SK-N-SH (cell line): ENCODE measurements at regions of chr1 and their contacts with region 1.

Region 1: GRCh38 chr1:119275145-119276134 is 93.1 kb upstream of the HAO2 start:
- DNase-seq: peak; percentile 30
- H3K4me3 ChIP-seq: no peak overlapping the region; a peak in 1 of 4 replicates
- H3K27ac ChIP-seq: no peak overlapping the region
- H3K4me1 ChIP-seq: peaks cover 5 to 9% of the 10 kb centered on the region in 2 experiments; a peak in 3 of 4 replicates
- H3K27me3 ChIP-seq: no peaks in the 10 kb centered on the region; the same call in 1 of the 2 replicates
- CTCF ChIP-seq: peak; percentile 98
- EP300 ChIP-seq: no peak
- RAD21 ChIP-seq: peak; percentile 69

Region 2: DNA sequence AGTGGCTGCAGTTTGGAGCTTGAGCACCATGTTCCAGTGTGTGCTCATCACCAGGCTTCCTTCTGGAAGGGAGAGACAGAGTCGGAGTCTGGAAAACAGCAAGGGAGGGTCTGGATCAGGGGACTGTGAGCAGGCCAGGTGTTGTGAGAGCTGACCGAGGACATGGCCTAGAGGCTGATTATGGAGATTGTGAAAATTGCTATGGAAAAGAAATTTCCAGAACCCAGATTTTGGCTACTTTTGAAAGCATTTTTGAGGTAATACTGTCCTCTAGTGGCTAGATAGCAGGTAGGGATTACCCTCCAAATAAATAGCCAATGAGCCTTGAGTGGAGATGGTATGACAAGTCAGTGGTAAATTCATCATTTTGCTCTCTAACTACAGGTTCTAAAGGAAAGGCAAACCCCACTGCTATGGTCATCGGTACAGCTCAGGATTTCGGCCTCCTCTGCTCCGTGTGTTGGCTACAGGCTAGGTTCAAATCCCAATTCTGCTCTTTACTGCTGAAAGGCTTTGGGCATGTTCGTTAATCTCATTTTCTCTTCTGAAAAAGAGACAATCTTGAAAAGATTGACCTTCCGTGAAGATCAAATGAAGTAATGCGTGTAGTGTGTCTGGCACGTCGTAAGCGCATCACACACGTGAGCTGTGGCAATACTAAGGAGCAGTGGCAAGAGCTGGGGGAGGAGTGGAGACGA is 92.1 kb after region 1 on chr1:
- CTCF ChIA-PET with region 1: interaction called, 23 read pairs
- POLR2A ChIA-PET with region 1: no interaction called
- DNase-seq: peak; percentile 35
- H3K4me3 ChIP-seq: peak overlapping the region in 1 of 2 experiments; percentile 18; a peak in 1 of 4 replicates
- H3K27ac ChIP-seq: no peak overlapping the region
- H3K4me1 ChIP-seq: no peaks in the 10 kb centered on the region; a peak in 1 of 4 replicates
- H3K27me3 ChIP-seq: peaks cover 39% of the 10 kb centered on the region
- CTCF ChIP-seq: peak; percentile 97
- EP300 ChIP-seq: no peak
- RAD21 ChIP-seq: peak; percentile 84